ENCODE measurements at regions of chr2 and their contacts with region 1.

Region 1: GRCh38 chr2:26745609-26746327 is 18.3 kb upstream of the SLC35F6 start:
- DNase-seq: peak; percentile 72
- ATAC-seq: peak; percentile 98
- H3K4me3 ChIP-seq: no peak overlapping the region
- H3K27ac ChIP-seq: no peak overlapping the region
- H3K4me1 ChIP-seq: no peaks in the 10 kb centered on the region; a peak in 1 of 4 replicates
- H3K27me3 ChIP-seq: no peaks in the 10 kb centered on the region
- CTCF ChIP-seq: peak; percentile 92 to 98 (median 93)
- POLR2A ChIP-seq: no peak
- RAD21 ChIP-seq: peak; percentile 100

Region 2: DNA sequence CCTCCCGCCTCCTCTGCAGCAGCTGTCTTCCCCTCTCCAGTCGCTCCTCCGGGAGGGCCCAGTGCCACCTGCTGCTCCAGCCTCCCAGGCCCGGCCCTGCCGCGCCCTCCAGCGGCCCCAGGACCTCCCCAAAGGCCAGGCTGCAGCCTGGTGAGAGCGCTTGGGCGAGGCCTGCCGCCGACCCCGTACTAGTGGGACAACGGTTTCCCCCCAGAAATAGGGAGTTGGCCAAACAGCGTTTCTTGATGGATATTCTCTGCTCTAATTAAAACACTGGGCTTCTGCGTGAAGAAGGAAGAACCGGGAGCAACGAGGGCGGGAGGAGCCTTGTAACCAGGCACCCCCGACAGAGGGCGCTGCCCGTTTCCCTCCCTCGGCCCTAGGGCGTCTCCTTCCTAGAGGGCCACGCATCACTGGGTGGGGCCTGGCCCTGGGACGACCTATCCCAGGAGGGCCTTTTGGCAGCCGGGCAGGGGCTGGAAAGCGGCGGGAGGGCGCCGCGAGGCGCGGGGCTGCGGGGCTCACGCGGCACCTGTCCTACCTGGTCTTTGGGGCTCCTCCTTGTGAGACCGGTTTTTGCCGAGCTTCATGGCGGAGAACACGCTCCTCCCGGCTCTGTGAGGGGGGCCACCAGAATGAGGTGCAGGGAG is 242.4 kb before region 1 on chr2:
- CTCF ChIA-PET with region 1: interaction called, 3 read pairs
- POLR2A ChIA-PET with region 1: no interaction called
- RAD21 ChIA-PET with region 1: no interaction called
- intact Hi-C with region 1: loop called (anchors 1 kb)
- DNase-seq: peak; percentile 73
- ATAC-seq: peak; percentile 99
- H3K4me3 ChIP-seq: peak overlapping the region; percentile 41 to 60
- H3K27ac ChIP-seq: peak overlapping the region; percentile 7; the same call in 1 of the 2 replicates
- H3K4me1 ChIP-seq: peaks cover 3 to 15% of the 10 kb centered on the region in 2 experiments; a peak in 3 of 4 replicates
- H3K27me3 ChIP-seq: no peaks in the 10 kb centered on the region; the same call in 1 of the 2 replicates
- CTCF ChIP-seq: peak; percentile 95 to 99 (median 98)
- POLR2A ChIP-seq: no peak
- RAD21 ChIP-seq: peak; percentile 68

Region 3: GRCh38 chr2:26521054-26521912 is 224.5 kb before region 1 on chr2:
- CTCF ChIA-PET with region 1: interaction called, 6 read pairs
- POLR2A ChIA-PET with region 1: no interaction called
- RAD21 ChIA-PET with region 1: interaction called in 1 of 2 experiments, 3 read pairs
- intact Hi-C with region 1: loop called (anchors 1 kb)
- DNase-seq: peak; percentile 38
- ATAC-seq: peak; percentile 96
- H3K4me3 ChIP-seq: no peak overlapping the region
- H3K27ac ChIP-seq: no peak overlapping the region
- H3K4me1 ChIP-seq: no peaks in the 10 kb centered on the region
- H3K27me3 ChIP-seq: peaks cover 18% of the 10 kb centered on the region; the same call in 1 of the 2 replicates
- CTCF ChIP-seq: peak; percentile 69 to 75 (median 75)
- POLR2A ChIP-seq: no peak
- RAD21 ChIP-seq: peak; percentile 77

Region 4: GRCh38 chr2:26605195-26605998 is 140.4 kb before region 1 on chr2:
- CTCF ChIA-PET with region 1: interaction called, 88 read pairs
- POLR2A ChIA-PET with region 1: interaction called, 11 read pairs
- RAD21 ChIA-PET with region 1: interaction called in 1 of 2 experiments, 6 read pairs
- intact Hi-C with region 1: loop called (anchors 1 kb)
- DNase-seq: peak; percentile 61
- ATAC-seq: peak; percentile 88
- H3K4me3 ChIP-seq: no peak overlapping the region
- H3K27ac ChIP-seq: no peak overlapping the region
- H3K4me1 ChIP-seq: peaks cover 14 to 26% of the 10 kb centered on the region in 2 experiments; a peak in 3 of 4 replicates
- H3K27me3 ChIP-seq: no peaks in the 10 kb centered on the region
- CTCF ChIP-seq: peak; percentile 84 to 90 (median 86)
- POLR2A ChIP-seq: no peak
- RAD21 ChIP-seq: peak; percentile 98

Region 5: DNA sequence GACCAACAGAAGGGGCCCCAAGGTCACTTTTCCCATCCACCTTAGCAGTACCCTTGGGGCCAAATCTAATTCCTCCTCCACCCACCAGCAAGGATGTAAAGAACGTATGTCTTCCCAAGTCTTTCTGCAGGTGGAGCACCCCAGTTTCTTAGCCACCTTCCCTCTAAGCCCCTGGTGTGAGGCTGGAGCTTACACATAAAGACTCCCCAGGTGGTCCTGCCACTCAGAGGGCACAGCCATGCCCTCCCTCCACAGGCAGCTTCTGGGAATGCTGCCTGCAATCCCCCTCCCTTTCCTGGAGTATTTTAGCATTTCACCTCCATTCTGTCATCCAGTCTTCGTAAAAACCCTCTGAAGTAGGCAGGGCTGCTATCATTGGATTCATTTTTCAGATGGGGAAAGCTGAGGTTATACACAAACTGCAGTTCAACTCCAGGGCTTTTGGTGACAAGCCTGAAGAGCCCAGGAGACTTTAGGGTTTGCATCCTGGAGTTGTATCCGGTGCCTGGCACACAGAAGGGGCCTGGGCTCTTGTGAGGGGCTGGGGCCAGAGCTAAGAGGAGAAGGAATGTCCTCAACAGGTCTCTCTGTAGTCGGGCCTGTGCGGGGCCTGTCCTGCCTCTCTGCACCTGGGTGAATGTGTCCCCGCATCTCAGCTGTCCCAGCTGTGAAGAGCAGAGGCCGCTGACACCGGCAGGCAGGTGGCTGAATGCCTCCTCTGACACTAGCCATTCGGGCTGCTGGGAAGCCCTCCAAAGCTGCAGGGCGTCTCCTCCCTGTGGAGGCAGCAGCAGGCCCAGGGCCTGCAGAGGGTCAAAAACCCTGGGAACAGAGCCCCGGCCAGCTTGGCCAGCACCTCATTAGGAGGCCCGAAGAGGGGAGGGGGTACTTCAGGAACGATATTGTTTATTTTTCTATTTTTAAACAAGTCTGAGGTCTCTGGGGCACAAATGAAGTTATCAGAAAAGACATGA is 132.2 kb before region 1 on chr2:
- CTCF ChIA-PET with region 1: interaction called, 30 read pairs
- POLR2A ChIA-PET with region 1: no interaction called
- RAD21 ChIA-PET with region 1: interaction called in 1 of 2 experiments, 9 read pairs
- intact Hi-C with region 1: loop called (anchors 2 kb)
- DNase-seq: no peak
- ATAC-seq: no peak
- H3K4me3 ChIP-seq: no peak overlapping the region
- H3K27ac ChIP-seq: no peak overlapping the region
- H3K4me1 ChIP-seq: no peaks in the 10 kb centered on the region
- H3K27me3 ChIP-seq: no peaks in the 10 kb centered on the region
- CTCF ChIP-seq: no peak
- POLR2A ChIP-seq: no peak
- RAD21 ChIP-seq: no peak